ENCODE measurements at regions of chr6 and their contacts with region 1.

Region 1: DNA sequence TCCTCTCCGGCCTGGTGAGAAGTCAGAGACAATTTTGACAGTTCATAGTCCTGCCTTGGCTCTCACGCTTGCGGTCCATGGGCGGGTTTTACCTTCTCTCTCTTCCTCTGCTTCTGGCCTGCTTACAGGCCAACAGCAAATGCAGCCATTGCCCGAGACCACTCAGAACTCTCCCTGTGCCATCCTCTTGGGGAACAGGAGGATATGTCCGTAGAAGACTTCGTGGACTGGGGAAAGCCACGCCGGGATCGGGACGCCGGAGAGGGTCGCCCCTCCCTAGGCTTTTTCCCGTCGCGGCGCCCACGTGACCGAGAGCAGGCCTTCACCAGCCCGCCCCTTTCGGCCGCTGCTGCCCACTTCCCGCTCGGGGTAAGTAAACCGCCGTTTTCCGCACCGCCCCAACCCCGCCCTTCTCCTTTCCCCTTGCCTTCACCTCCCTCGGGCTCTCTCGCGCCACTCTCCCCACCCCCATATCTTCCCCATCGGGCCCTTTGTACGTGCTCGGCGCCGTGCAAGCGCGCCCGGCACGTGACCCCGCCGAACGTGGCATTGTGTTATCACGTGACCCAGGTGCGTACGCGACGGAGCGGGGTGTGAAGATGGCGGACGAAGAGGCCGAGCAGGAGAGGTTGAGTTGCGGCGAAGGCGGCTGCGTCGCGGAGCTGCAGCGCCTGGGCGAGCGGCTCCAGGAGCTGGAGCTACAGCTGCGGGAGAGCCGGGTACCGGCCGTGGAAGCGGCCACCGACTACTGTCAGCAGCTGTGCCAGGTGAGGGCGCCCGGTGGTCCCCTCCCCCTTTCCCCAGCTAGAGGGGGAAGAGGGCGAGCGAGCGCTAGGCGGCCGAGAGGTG is at the start of gene ZNF292:
- DNase-seq: peak; percentile 98
- H3K4me3 Mint-ChIP-seq: peak within 1 kb of the TSS; percentile 85
- H3K27ac Mint-ChIP-seq: peak within 1 kb of the TSS; percentile 94
- H3K4me1 Mint-ChIP-seq: peaks cover 46% of the 10 kb centered on the region
- H3K27me3 Mint-ChIP-seq: no peaks in the 10 kb centered on the region
- total RNA-seq, gene ZNF292: 39.5 to 41.2 TPM

Region 2: GRCh38 chr6:85593438-85594196 is 1561.6 kb before region 1 on chr6 and contains the start of gene SNX14:
- CTCF ChIA-PET with region 1: no interaction called
- intact Hi-C with region 1: loop called (anchors 5 kb)
- DNase-seq: peak; percentile 77
- H3K4me3 Mint-ChIP-seq: peak within 1 kb of the TSS; percentile 93
- H3K27ac Mint-ChIP-seq: peak within 1 kb of the TSS; percentile 94
- H3K4me1 Mint-ChIP-seq: peaks cover 30% of the 10 kb centered on the region
- H3K27me3 Mint-ChIP-seq: no peaks in the 10 kb centered on the region
- total RNA-seq, gene SNX14: 18.8 to 22.6 TPM

Region 3: DNA sequence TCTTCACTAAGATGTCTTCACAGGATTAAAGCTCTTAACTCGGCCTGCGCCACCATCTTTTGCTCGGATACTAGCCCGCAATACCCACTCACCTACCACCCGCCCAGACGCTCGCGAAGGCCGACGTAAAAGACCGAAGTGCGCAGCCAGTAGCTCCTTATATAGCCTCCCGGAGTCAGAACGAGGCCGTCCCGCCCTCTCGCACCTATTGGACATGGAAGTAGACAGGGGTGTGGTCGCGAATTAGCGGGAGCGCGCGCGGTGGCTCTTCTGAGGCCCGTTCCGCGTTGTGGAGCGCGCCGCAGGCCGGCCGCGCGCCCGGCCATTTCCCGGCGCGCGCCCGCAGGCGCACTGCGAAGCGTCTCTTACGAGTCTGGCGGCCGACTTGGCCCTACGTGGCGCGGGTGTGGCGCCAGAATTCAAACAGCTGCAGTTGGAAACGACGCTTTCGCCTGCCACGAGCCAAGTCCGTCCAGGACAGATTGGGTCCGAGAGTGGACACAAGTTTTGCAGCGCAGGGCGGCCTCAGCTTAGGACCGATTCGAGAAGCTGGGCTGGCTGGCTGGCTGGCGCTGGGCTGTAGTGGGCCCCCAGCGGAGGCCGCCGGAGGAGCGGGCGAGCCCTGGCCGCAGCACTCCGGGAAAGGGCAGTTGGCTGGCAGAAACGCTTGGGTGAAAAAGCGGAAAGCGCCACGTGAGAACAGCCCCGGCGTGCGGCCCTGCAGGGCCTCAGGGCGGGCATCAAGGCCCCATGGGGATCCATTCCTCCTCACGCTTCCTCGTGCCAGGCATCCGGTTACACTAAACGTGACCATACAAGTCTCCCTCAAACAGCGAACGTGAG is 1476.4 kb before region 1 on chr6:
- CTCF ChIA-PET with region 1: no interaction called
- intact Hi-C with region 1: loop called (anchors 2 kb)
- DNase-seq: peak; percentile 96
- H3K4me3 Mint-ChIP-seq: peak overlapping the region; percentile 97
- H3K27ac Mint-ChIP-seq: peak overlapping the region; percentile 96
- H3K4me1 Mint-ChIP-seq: peaks cover 31% of the 10 kb centered on the region
- H3K27me3 Mint-ChIP-seq: no peaks in the 10 kb centered on the region

Region 4: DNA sequence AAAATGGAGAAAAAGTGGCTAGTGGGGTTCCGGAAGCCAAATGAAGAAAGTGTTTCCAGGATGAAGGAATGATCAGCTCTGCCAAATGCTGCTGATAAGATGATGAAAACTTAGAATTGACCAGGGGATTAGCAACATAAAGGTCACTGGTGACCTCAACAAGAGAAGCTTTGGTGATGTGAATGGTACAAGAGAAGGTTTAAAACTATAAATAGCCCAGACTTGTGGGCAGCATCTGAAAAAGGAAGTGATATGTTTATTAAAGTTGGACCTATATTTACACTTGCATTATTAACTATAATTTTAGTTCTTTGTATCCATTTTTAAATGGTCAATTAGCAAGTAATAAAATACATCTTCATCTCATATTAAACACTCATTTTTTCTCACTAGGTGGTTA is 105.4 kb before region 1 on chr6:
- CTCF ChIA-PET with region 1: no interaction called
- intact Hi-C with region 1: no loop called
- DNase-seq: no peak
- H3K4me3 Mint-ChIP-seq: no peak overlapping the region
- H3K27ac Mint-ChIP-seq: no peak overlapping the region
- H3K4me1 Mint-ChIP-seq: no peaks in the 10 kb centered on the region
- H3K27me3 Mint-ChIP-seq: peaks cover 5% of the 10 kb centered on the region

Region 5: GRCh38 chr6:87115402-87116135 is 39.6 kb before region 1 on chr6:
- CTCF ChIA-PET with region 1: no interaction called
- intact Hi-C with region 1: no loop called
- DNase-seq: peak; percentile 26
- H3K4me3 Mint-ChIP-seq: no peak overlapping the region
- H3K27ac Mint-ChIP-seq: no peak overlapping the region
- H3K4me1 Mint-ChIP-seq: no peaks in the 10 kb centered on the region
- H3K27me3 Mint-ChIP-seq: peaks cover 3% of the 10 kb centered on the region

Region 6: DNA sequence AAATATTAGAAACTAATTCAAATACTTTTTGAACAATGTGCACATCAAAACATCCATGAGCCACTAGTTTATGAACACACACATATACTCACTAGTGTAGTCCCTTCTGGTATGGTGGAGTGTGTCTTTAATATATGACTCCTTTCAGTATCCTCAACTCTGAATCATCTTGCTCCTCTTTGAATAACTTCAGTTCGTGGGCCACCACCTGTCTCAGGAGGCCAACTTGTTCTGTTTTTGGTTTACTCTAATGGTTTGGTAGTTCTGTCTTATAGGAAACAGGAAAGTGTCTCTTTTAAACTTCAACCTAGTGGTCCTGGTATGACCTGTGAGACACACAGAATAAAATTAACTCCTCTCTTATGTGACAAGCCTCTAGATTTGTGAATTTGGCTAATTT is 55.8 kb after region 1 on chr6:
- CTCF ChIA-PET with region 1: no interaction called
- intact Hi-C with region 1: loop called (anchors 1 kb)
- DNase-seq: peak; percentile 73
- H3K4me3 Mint-ChIP-seq: no peak overlapping the region
- H3K27ac Mint-ChIP-seq: peak overlapping the region; percentile 84
- H3K4me1 Mint-ChIP-seq: peaks cover 73% of the 10 kb centered on the region
- H3K27me3 Mint-ChIP-seq: no peaks in the 10 kb centered on the region

Region 7: DNA sequence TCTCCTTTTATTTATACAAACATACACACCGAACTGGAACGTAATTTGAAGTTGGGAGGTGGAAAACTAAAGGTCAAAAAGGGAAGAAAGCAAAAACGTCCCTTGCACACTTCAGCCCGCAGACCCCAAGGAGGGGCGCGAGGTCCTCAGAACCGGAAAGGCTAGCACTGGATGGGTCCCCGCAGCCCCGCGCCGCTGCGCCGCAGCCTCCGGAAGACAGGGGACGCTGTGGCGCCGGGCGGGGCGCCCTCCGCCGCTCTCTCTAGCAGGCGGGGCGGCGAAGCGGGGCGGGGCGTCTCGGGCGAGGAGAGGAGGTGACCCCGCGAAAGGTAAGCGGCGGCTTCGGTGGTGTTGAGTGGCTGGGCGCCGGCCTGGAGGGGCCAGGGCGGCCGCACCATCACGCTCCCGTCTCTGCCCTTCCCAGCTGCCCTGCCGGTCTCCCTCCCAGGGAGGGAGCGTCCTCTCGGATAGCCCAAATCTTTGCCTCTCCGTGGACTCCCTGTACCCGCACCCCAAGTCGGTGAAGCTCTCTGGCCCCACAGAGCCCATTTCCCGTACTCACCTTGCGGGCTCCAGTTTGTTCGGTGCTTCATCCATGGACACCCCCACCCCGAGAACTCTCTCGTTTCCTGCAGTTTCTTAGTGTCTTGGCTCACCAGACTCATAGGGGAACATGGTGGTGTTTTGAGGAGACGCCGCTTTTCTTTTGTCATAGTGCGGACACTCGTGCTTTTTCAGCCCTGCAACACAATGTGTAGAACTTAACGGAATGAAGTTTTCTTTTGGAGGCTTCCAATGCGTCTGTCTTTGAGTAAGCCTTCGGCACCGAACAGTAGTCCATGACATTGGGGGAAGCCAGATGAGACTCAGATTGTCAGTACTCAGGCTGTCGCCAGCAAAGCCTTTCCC is 167.3 kb after region 1 on chr6 and contains the start of gene SMIM8:
- CTCF ChIA-PET with region 1: no interaction called
- intact Hi-C with region 1: loop called (anchors 1 kb)
- DNase-seq: peak; percentile 86
- H3K4me3 Mint-ChIP-seq: peak within 1 kb of the TSS; percentile 98
- H3K27ac Mint-ChIP-seq: peak within 1 kb of the TSS; percentile 85
- H3K4me1 Mint-ChIP-seq: peaks cover 18% of the 10 kb centered on the region
- H3K27me3 Mint-ChIP-seq: no peaks in the 10 kb centered on the region
- total RNA-seq, gene SMIM8: 8.0 to 8.6 TPM

Region 8: DNA sequence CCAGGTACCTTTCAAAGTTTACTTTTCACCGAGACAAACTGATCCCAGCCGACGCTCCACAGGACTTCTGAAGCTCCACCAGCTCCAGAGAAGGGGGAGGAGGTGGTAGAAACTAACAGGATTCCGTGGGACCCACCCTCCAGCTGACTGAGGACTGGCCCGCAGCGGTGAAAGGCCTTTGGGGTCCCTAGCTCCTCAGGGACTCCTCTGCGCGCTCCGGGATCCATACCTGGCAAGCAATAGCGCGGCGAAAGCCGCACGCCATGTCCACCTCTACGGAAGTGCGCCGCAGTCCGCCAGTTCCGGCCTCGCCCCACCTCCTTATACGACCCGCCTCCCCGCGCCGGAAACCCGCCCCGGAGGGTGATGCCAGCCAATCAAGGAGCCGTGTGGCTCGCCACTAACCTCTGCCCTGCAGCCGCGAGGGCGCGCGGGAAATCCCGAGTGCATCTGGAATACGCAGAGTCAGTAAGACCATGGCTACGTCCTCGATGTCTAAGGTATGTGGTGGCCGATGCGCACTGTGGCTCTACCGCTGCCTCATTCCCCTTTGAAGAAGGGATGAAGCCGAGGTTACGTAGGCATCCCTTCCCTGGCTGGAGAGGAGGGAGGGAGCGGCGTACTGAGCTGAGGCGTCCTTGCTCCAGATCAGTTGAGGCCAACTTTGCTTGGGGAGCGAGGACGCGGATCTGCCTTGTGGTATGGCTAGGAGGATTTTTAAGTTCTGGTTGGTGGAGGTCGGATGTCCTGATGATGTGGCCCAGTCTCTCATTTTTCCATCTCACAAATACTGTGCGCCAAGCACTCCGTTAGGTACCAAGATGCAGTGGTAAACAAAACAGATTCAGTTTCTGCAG is 434.7 kb after region 1 on chr6 and contains the starts of genes ORC3 and RARS2:
- CTCF ChIA-PET with region 1: no interaction called
- intact Hi-C with region 1: loop called (anchors 1 kb)
- DNase-seq: peak; percentile 97
- H3K4me3 Mint-ChIP-seq: peak within 1 kb of the TSS; percentile 90
- H3K27ac Mint-ChIP-seq: peak within 1 kb of the TSS; percentile 83
- H3K4me1 Mint-ChIP-seq: peaks cover 60% of the 10 kb centered on the region
- H3K27me3 Mint-ChIP-seq: no peaks in the 10 kb centered on the region
- total RNA-seq, gene ORC3: 33.8 to 36.1 TPM
- total RNA-seq, gene RARS2: 15.9 to 17.4 TPM

Measured in activated naive CD4-positive, alpha-beta T cell treated with anti-CD3 and anti-CD28 coated beads for 36 hours (primary cell).